ENCODE measurements at regions of chr1 and their contacts with region 1.

Region 1: GRCh38 chr1:47424336-47424982 is 8.4 kb downstream of the FOXE3 start:
- DNase-seq: peak; percentile 81
- H3K4me3 Mint-ChIP-seq: no peak overlapping the region
- H3K27ac Mint-ChIP-seq: no peak overlapping the region
- H3K4me1 Mint-ChIP-seq: peaks cover 11% of the 10 kb centered on the region
- H3K27me3 Mint-ChIP-seq: no peaks in the 10 kb centered on the region
- CTCF ChIP-seq: peak; percentile 68

Region 2: GRCh38 chr1:47333922-47334764 is 90.3 kb before region 1 on chr1:
- CTCF ChIA-PET with region 1: interaction called, 3 read pairs
- POLR2A ChIA-PET with region 1: no interaction called
- intact Hi-C with region 1: loop called (anchors 1 kb)
- DNase-seq: peak; percentile 73
- H3K4me3 Mint-ChIP-seq: no peak overlapping the region
- H3K27ac Mint-ChIP-seq: no peak overlapping the region
- H3K4me1 Mint-ChIP-seq: peaks cover 6% of the 10 kb centered on the region
- H3K27me3 Mint-ChIP-seq: no peaks in the 10 kb centered on the region
- CTCF ChIP-seq: peak; percentile 19

Region 3: GRCh38 chr1:47409311-47410070 is 15.0 kb before region 1 on chr1:
- CTCF ChIA-PET with region 1: interaction called, 31 read pairs
- POLR2A ChIA-PET with region 1: interaction called, 6 read pairs
- intact Hi-C with region 1: no loop called
- DNase-seq: peak; percentile 83
- H3K4me3 Mint-ChIP-seq: peak overlapping the region; percentile 42
- H3K27ac Mint-ChIP-seq: peak overlapping the region; percentile 68
- H3K4me1 Mint-ChIP-seq: peaks cover 38% of the 10 kb centered on the region
- H3K27me3 Mint-ChIP-seq: no peaks in the 10 kb centered on the region
- CTCF ChIP-seq: no peak

Region 4: DNA sequence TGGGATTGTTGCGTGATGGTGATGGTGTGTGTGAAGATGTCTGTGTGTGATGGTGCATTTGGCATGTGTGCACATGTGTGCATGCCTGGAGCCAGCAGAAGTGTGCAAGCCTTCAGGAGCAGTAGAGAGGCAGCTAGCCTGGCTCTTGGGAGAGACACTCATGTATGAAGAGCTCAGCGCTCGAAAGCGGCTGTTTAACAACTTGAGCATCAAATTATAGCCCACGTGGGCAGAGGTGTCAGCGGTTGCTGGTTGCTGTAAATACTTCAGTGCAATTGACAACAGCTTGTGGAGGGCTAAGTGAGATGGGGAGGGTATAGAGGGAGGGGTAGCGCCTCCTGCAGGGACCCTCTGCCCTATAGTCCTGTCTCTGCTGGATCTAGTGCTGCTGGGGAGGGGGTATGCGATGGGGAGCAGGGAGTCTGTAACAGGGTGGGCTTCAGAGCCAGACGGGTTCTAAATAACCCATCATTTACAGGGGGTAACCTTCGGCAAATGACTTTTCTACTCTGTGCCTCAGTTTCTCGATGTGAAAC is 34.9 kb after region 1 on chr1:
- CTCF ChIA-PET with region 1: no interaction called
- POLR2A ChIA-PET with region 1: no interaction called
- intact Hi-C with region 1: no loop called
- DNase-seq: no peak
- H3K4me3 Mint-ChIP-seq: no peak overlapping the region
- H3K27ac Mint-ChIP-seq: no peak overlapping the region
- H3K4me1 Mint-ChIP-seq: no peaks in the 10 kb centered on the region
- H3K27me3 Mint-ChIP-seq: peaks cover 56% of the 10 kb centered on the region
- CTCF ChIP-seq: no peak

Region 5: DNA sequence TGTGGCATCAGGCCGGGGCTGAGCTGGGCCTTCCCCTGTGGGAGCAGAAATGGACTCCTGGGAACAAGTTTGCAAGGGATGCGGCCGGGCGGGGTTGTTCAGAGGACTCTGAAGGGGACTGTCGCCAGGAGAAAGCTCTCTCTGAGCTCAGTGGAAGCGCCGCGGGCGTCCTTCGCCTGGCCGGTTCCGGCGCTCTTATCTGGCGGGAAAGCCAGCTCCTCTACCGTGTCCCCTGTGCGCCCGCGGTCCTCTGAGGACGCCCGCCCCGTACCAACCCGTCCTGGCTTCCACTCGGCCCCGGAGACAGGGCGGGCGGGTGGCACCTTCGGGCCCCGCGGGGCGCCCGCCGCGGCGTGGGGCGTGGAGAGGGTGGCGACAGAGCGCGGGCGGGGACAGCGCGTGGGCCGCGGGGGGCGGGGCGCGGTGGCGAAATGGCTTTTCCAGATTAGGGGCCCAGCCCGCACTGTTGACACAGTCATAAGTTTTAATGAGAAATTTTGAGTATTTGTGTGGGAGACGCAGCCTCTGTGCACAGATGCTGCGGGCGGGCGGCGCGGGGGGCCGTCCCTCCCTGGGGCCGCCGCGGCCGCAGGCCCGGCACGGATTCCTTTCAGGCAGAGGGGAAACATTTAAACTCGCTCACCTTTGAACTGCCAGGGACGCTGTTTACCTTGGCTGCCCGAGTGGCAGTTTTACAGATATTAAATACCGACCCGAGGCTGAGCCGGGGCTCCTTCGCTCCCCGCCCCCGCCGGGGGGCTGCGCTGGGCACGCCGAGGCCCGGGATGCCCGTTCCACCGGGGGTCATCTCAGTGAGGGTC is 83.6 kb after region 1 on chr1:
- CTCF ChIA-PET with region 1: no interaction called
- POLR2A ChIA-PET with region 1: no interaction called
- intact Hi-C with region 1: no loop called
- DNase-seq: no peak
- H3K4me3 Mint-ChIP-seq: no peak overlapping the region
- H3K27ac Mint-ChIP-seq: no peak overlapping the region
- H3K4me1 Mint-ChIP-seq: no peaks in the 10 kb centered on the region
- H3K27me3 Mint-ChIP-seq: peaks cover 29% of the 10 kb centered on the region
- CTCF ChIP-seq: no peak

Measured in MCF 10A (cell line).